T-cell (primary cell): ENCODE measurements at regions of chr22 and their contacts with region 1.

Region 1: DNA sequence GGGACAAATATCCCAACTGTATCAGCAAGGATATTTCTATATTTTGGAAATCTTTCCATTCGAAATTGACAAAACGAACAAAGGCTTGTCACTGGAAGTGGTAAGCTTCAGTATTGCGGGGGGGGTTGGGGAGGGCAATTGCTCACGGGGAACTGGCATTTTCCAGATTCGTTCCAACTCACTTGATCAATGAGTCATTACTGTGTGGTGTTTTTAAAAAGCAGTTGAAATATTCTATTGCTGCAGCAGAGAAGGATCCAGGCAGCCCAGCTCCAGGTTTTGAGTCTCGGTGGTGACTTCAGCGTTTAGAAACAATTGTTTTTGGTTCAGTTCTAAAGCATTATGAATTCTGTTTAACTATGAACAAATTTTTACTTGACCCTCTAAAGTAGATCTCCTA is 33.8 kb upstream of the FBLN1 start:
- DNase-seq: no peak
- ATAC-seq: no peak
- H3K4me3 ChIP-seq: no peak overlapping the region
- H3K4me3 Mint-ChIP-seq: no peak overlapping the region
- H3K27ac ChIP-seq: no peak overlapping the region
- H3K27ac Mint-ChIP-seq: no peak overlapping the region
- H3K4me1 ChIP-seq: no peaks in the 10 kb centered on the region
- H3K4me1 Mint-ChIP-seq: no peaks in the 10 kb centered on the region
- H3K27me3 ChIP-seq: peaks cover 0 to 5% of the 10 kb centered on the region in 2 experiments
- H3K27me3 Mint-ChIP-seq: peaks cover 7 to 9% of the 10 kb centered on the region in 2 donors

Region 2: DNA sequence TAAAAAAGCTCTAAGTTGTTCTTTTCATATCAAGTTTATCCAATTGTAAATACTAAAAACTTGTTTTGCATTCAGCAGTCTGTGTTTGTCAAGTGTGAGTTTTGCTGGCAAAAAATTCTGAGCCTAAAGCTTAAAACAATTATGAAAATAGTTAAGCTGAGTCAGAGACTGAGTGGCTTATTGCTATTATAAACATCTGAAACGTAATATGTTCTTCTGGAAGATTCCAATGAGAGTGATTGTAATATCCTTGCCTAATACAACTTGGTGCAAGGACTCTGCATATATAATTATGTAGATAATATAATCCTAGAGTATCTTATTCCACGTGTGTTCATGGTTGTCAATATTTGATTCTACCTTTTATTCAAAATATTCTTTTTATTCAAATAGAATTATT is 319.2 kb before region 1 on chr22:
- CTCF ChIA-PET with region 1: no interaction called
- POLR2A ChIA-PET with region 1: interaction called in 1 of 2 experiments, 13 read pairs
- DNase-seq: no peak
- ATAC-seq: no peak
- H3K4me3 ChIP-seq: no peak overlapping the region
- H3K4me3 Mint-ChIP-seq: no peak overlapping the region
- H3K27ac ChIP-seq: no peak overlapping the region
- H3K27ac Mint-ChIP-seq: no peak overlapping the region
- H3K4me1 ChIP-seq: no peaks in the 10 kb centered on the region
- H3K4me1 Mint-ChIP-seq: peaks cover 0 to 7% (median 0%) of the 10 kb centered on the region in 3 donors
- H3K27me3 ChIP-seq: no peaks in the 10 kb centered on the region
- H3K27me3 Mint-ChIP-seq: no peaks in the 10 kb centered on the region